ENCODE measurements at regions of chr18 and their contacts with region 1.

Region 1: DNA sequence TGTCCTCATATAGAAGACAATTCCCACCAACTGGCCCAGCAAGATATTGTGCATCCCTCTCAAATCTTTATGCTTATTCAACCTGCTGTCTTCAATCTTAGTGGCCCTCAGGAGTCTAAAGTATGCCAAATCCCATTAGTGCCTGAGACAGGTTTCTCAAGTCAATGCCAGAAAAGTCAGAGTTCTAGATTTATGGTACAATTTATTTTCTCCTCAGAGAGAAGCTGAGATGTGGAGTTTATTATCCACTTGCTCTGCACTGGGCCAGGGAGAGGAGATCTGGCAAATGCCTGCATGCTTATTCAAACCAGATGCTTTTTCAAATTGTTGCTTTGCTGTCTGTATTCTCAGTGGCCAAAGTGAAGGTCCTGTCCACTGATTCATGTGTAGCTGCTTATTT is 825.2 kb downstream of the METTL4 start:
- DNase-seq: no peak
- H3K4me3 ChIP-seq: no peak overlapping the region
- H3K4me3 Mint-ChIP-seq: no peak overlapping the region
- H3K27ac Mint-ChIP-seq: no peak overlapping the region
- H3K4me1 ChIP-seq: no peaks in the 10 kb centered on the region
- H3K4me1 Mint-ChIP-seq: no peaks in the 10 kb centered on the region
- H3K27me3 ChIP-seq: no peaks in the 10 kb centered on the region
- H3K27me3 Mint-ChIP-seq: peaks cover 8% of the 10 kb centered on the region
- CTCF ChIP-seq: no peak

Region 2: GRCh38 chr18:1499265-1499664 is 246.9 kb before region 1 on chr18:
- CTCF ChIA-PET with region 1: no interaction called
- POLR2A ChIA-PET with region 1: no interaction called
- intact Hi-C with region 1: no loop called
- DNase-seq: no peak
- H3K4me3 ChIP-seq: no peak overlapping the region
- H3K4me3 Mint-ChIP-seq: no peak overlapping the region
- H3K27ac Mint-ChIP-seq: no peak overlapping the region
- H3K4me1 ChIP-seq: no peaks in the 10 kb centered on the region
- H3K4me1 Mint-ChIP-seq: no peaks in the 10 kb centered on the region
- H3K27me3 ChIP-seq: no peaks in the 10 kb centered on the region
- H3K27me3 Mint-ChIP-seq: no peaks in the 10 kb centered on the region
- CTCF ChIP-seq: peak; percentile 11 to 22

Region 3: GRCh38 chr18:1774261-1774660 is 28.1 kb after region 1 on chr18:
- CTCF ChIA-PET with region 1: no interaction called
- POLR2A ChIA-PET with region 1: no interaction called
- intact Hi-C with region 1: loop called (anchors 2 kb)
- DNase-seq: no peak
- H3K4me3 ChIP-seq: no peak overlapping the region
- H3K4me3 Mint-ChIP-seq: no peak overlapping the region
- H3K27ac Mint-ChIP-seq: no peak overlapping the region
- H3K4me1 ChIP-seq: no peaks in the 10 kb centered on the region
- H3K4me1 Mint-ChIP-seq: no peaks in the 10 kb centered on the region
- H3K27me3 ChIP-seq: no peaks in the 10 kb centered on the region
- H3K27me3 Mint-ChIP-seq: no peaks in the 10 kb centered on the region
- CTCF ChIP-seq: no peak

Measured in Caco-2 (cell line).